CD8-positive, alpha-beta T cell (primary cell): ENCODE measurements at regions of chr9 and their contacts with region 1.

Region 1: GRCh38 chr9:96654443-96655197 is 497 bp downstream of the PRXL2C start:
- DNase-seq: peak; percentile 52 to 96 (median 77)
- ATAC-seq: peak; percentile 88
- H3K4me3 ChIP-seq: peak overlapping the region; percentile 57 to 71
- H3K4me3 Mint-ChIP-seq: peak overlapping the region; percentile 97
- H3K27ac ChIP-seq: peak overlapping the region; percentile 62 to 66
- H3K27ac Mint-ChIP-seq: peak overlapping the region; percentile 98
- H3K4me1 ChIP-seq: peaks cover 7% of the 10 kb centered on the region
- H3K4me1 Mint-ChIP-seq: peaks cover 22% of the 10 kb centered on the region
- H3K27me3 ChIP-seq: no peaks in the 10 kb centered on the region
- H3K27me3 Mint-ChIP-seq: no peaks in the 10 kb centered on the region
- CTCF ChIP-seq: no peak

Region 2: GRCh38 chr9:95317119-95317892 is 1337.3 kb before region 1 on chr9 and contains the start of gene FANCC:
- CTCF ChIA-PET with region 1: no interaction called
- POLR2A ChIA-PET with region 1: no interaction called
- intact Hi-C with region 1: loop called in 1 of 2 experiments (anchors 5 kb)
- DNase-seq: peak; percentile 71 to 93 (median 85)
- ATAC-seq: peak; percentile 79
- H3K4me3 ChIP-seq: peak within 1 kb of the TSS; percentile 87 to 99
- H3K4me3 Mint-ChIP-seq: peak within 1 kb of the TSS; percentile 94
- H3K27ac ChIP-seq: peak within 1 kb of the TSS; percentile 75 to 78
- H3K27ac Mint-ChIP-seq: peak within 1 kb of the TSS; percentile 91
- H3K4me1 ChIP-seq: peaks cover 12% of the 10 kb centered on the region
- H3K4me1 Mint-ChIP-seq: peaks cover 22% of the 10 kb centered on the region
- H3K27me3 ChIP-seq: no peaks in the 10 kb centered on the region
- H3K27me3 Mint-ChIP-seq: peaks cover 4% of the 10 kb centered on the region
- CTCF ChIP-seq: no peak
- total RNA-seq, gene FANCC: 4.2 to 6.1 TPM

Region 3: GRCh38 chr9:96449845-96450612 is 204.6 kb before region 1 on chr9 and contains the start of gene HABP4:
- CTCF ChIA-PET with region 1: no interaction called
- POLR2A ChIA-PET with region 1: interaction called, 4 read pairs
- intact Hi-C with region 1: loop called (anchors 2 kb)
- DNase-seq: peak; percentile 89 to 97 (median 96)
- ATAC-seq: peak; percentile 93
- H3K4me3 ChIP-seq: peak within 1 kb of the TSS; percentile 62 to 65
- H3K4me3 Mint-ChIP-seq: peak within 1 kb of the TSS; percentile 95
- H3K27ac ChIP-seq: peak within 1 kb of the TSS; percentile 16 to 59
- H3K27ac Mint-ChIP-seq: peak within 1 kb of the TSS; percentile 94
- H3K4me1 ChIP-seq: peaks cover 12% of the 10 kb centered on the region
- H3K4me1 Mint-ChIP-seq: peaks cover 24% of the 10 kb centered on the region
- H3K27me3 ChIP-seq: no peaks in the 10 kb centered on the region
- H3K27me3 Mint-ChIP-seq: no peaks in the 10 kb centered on the region
- CTCF ChIP-seq: no peak
- total RNA-seq, gene HABP4: 31.9 to 32.6 TPM

Region 4: GRCh38 chr9:96566498-96567207 is 88.0 kb before region 1 on chr9:
- CTCF ChIA-PET with region 1: no interaction called
- POLR2A ChIA-PET with region 1: interaction called, 3 read pairs
- intact Hi-C with region 1: loop called (anchors 1 to 5 kb)
- DNase-seq: peak; percentile 57 to 92 (median 82)
- ATAC-seq: peak; percentile 86
- H3K4me3 ChIP-seq: peak overlapping the region; percentile 76 to 88
- H3K4me3 Mint-ChIP-seq: peak overlapping the region; percentile 86
- H3K27ac ChIP-seq: peak overlapping the region; percentile 87 to 91
- H3K27ac Mint-ChIP-seq: peak overlapping the region; percentile 84
- H3K4me1 ChIP-seq: peaks cover 24% of the 10 kb centered on the region
- H3K4me1 Mint-ChIP-seq: peaks cover 27% of the 10 kb centered on the region
- H3K27me3 ChIP-seq: no peaks in the 10 kb centered on the region
- H3K27me3 Mint-ChIP-seq: peaks cover 12% of the 10 kb centered on the region
- CTCF ChIP-seq: peak; percentile 58

Region 5: DNA sequence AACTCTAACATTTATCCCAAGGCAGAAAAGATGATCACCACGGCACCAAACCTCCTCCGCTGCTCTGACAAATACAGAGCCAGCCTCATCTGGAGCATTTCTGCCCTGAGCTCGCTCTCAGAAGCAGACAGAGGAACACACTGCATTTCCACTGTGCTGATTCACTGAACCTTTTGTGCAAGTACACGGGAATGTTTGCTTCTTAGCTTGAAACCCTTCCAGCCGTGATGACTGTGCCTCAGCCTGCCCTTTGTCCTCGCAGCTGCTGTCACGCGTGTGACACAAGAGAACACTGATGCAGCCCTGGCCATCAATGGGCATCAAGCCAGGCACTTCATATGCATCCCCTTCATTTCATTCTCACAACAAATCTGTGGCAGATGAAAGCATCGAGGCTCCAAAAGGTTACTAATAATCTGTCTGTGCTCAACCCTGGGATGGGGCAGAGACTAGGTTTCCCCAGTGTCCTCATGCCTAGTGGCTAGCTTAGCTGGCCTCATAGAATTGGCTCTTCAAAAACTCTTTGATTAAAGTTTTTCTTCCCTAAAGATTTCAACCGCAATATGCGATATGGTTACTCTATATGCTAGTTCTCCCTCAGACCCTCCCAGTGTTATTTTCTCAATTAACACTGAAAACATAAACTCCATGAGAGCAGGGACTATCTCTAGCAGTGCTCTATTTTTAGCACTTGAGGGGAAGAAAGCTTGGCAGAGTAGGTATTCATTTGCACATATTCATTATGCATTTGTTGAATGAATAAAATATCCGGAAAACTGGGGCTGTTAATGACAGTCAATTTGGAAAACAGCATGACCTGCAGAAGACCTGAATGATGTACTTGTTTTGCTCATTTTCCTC is 42.3 kb before region 1 on chr9:
- CTCF ChIA-PET with region 1: no interaction called
- POLR2A ChIA-PET with region 1: no interaction called
- intact Hi-C with region 1: no loop called
- DNase-seq: no peak
- ATAC-seq: no peak
- H3K4me3 ChIP-seq: no peak overlapping the region
- H3K4me3 Mint-ChIP-seq: no peak overlapping the region
- H3K27ac ChIP-seq: no peak overlapping the region
- H3K27ac Mint-ChIP-seq: no peak overlapping the region
- H3K4me1 ChIP-seq: no peaks in the 10 kb centered on the region
- H3K4me1 Mint-ChIP-seq: no peaks in the 10 kb centered on the region
- H3K27me3 ChIP-seq: peaks cover 3 to 6% of the 10 kb centered on the region in 2 experiments
- H3K27me3 Mint-ChIP-seq: peaks cover 47% of the 10 kb centered on the region
- CTCF ChIP-seq: no peak

Region 6: DNA sequence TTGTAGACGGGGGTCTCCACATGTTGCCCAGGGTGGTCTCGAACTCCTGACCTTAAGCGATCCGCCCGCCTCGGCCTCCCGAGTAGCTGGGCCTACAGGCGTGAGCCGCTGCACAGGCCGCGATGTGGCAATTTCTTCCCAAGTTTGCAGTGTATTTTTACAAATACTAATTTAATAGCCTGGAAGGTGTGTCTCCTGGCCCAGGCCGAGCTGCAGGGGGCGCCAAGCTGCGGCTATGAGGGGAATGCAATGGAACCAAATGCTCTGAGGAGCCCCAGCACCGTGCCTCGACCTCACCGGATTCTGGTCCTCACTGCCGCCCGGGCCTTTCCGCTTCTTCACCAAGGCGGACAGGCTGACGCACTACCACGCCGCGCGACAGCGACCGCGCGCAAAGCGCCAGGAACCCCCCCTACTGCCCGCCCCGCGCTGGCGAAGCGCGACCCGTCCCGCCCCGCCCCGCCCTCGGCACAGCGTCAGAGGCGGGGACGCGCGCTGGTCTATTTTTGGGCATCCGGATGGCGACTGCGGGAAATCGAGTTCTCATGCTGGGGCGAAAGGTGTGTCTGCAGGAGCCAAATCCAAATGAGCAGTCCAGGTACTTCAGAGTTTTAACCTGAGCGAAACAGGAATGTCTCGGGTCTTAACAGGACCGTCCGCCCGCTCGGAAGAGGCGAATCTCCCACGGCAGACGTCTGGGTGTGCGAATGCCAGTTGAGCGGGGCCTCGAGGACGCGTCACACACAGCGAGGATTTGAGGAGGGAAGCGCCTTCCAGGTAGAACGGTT is 32.1 kb after region 1 on chr9:
- CTCF ChIA-PET with region 1: no interaction called
- POLR2A ChIA-PET with region 1: no interaction called
- intact Hi-C with region 1: loop called in 1 of 2 experiments (anchors 2 kb)
- DNase-seq: peak; percentile 47 to 91 (median 81)
- ATAC-seq: peak; percentile 96
- H3K4me3 ChIP-seq: peak overlapping the region; percentile 50 to 81
- H3K4me3 Mint-ChIP-seq: peak overlapping the region; percentile 87
- H3K27ac ChIP-seq: peak overlapping the region; percentile 35 to 53
- H3K27ac Mint-ChIP-seq: peak overlapping the region; percentile 89
- H3K4me1 ChIP-seq: no peaks in the 10 kb centered on the region
- H3K4me1 Mint-ChIP-seq: peaks cover 11% of the 10 kb centered on the region
- H3K27me3 ChIP-seq: no peaks in the 10 kb centered on the region
- H3K27me3 Mint-ChIP-seq: peaks cover 5% of the 10 kb centered on the region
- CTCF ChIP-seq: peak; percentile 28

Region 7: GRCh38 chr9:96777426-96777864 is 122.8 kb after region 1 on chr9:
- CTCF ChIA-PET with region 1: no interaction called
- POLR2A ChIA-PET with region 1: no interaction called
- intact Hi-C with region 1: loop called (anchors 2 to 10 kb)
- DNase-seq: no peak
- ATAC-seq: no peak
- H3K4me3 ChIP-seq: peak overlapping the region; percentile 54 to 70
- H3K4me3 Mint-ChIP-seq: peak overlapping the region; percentile 97
- H3K27ac ChIP-seq: peak overlapping the region; percentile 76 to 77
- H3K27ac Mint-ChIP-seq: peak overlapping the region; percentile 99
- H3K4me1 ChIP-seq: peaks cover 14% of the 10 kb centered on the region
- H3K4me1 Mint-ChIP-seq: peaks cover 52% of the 10 kb centered on the region
- H3K27me3 ChIP-seq: no peaks in the 10 kb centered on the region
- H3K27me3 Mint-ChIP-seq: no peaks in the 10 kb centered on the region
- CTCF ChIP-seq: no peak